ENCODE measurements at regions of chr4 and their contacts with region 1.

Region 1: GRCh38 chr4:152831416-152831815 is 51.7 kb downstream of the ARFIP1 start:
- DNase-seq: no peak
- H3K4me3 ChIP-seq: no peak overlapping the region
- H3K27me3 ChIP-seq: no peaks in the 10 kb centered on the region
- CTCF ChIP-seq: no peak

Region 2: GRCh38 chr4:152817331-152817730 is 14.1 kb before region 1 on chr4:
- CTCF ChIA-PET with region 1: interaction called, 3 read pairs
- POLR2A ChIA-PET with region 1: interaction called, 12 read pairs
- DNase-seq: peak; percentile 21
- H3K4me3 ChIP-seq: no peak overlapping the region
- H3K27me3 ChIP-seq: no peaks in the 10 kb centered on the region
- CTCF ChIP-seq: no peak

Region 3: GRCh38 chr4:153008578-153009199 is 177.3 kb after region 1 on chr4:
- CTCF ChIA-PET with region 1: no interaction called
- POLR2A ChIA-PET with region 1: no interaction called
- DNase-seq: no peak
- H3K4me3 ChIP-seq: no peak overlapping the region
- H3K27me3 ChIP-seq: peaks cover 9% of the 10 kb centered on the region; the same call in 1 of the 2 replicates
- CTCF ChIP-seq: no peak